ENCODE measurements at regions of chr14 and their contacts with region 1.

Region 1: GRCh38 chr14:75126679-75127473 is at the start of gene NEK9:
- DNase-seq: peak; percentile 93
- H3K4me3 ChIP-seq: peak within 1 kb of the TSS; percentile 69
- H3K27ac ChIP-seq: peak within 1 kb of the TSS; percentile 83
- H3K4me1 ChIP-seq: peaks cover 20% of the 10 kb centered on the region
- H3K27me3 ChIP-seq: no peaks in the 10 kb centered on the region
- CTCF ChIP-seq: no peak
- total RNA-seq, gene NEK9: 75.8 and 76.1 TPM in 2 replicates

Region 2: DNA sequence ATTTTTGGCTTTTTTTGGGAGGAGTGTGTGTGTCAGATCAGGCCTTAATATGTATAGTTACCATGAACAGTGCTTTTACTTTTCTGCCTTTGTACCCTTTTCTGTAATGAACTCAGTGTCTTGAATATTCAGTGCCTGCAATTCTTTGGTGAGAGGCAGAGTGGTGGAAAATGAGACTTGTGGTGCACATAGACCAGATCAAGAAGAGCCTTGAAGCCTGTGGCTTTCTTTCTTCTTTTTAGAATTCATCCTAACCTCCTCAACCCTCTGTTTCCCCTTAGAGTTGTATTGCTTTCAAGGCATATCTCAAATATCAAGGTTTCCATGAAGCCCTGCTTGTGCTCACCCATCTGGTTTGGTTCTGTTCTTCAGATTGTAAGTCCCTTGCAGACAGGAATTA is 361.2 kb before region 1 on chr14:
- CTCF ChIA-PET with region 1: no interaction called
- POLR2A ChIA-PET with region 1: no interaction called
- intact Hi-C with region 1: no loop called
- DNase-seq: no peak
- H3K4me3 ChIP-seq: peak overlapping the region; percentile 94
- H3K27ac ChIP-seq: no peak overlapping the region
- H3K4me1 ChIP-seq: no peaks in the 10 kb centered on the region
- H3K27me3 ChIP-seq: no peaks in the 10 kb centered on the region
- CTCF ChIP-seq: no peak

Region 3: DNA sequence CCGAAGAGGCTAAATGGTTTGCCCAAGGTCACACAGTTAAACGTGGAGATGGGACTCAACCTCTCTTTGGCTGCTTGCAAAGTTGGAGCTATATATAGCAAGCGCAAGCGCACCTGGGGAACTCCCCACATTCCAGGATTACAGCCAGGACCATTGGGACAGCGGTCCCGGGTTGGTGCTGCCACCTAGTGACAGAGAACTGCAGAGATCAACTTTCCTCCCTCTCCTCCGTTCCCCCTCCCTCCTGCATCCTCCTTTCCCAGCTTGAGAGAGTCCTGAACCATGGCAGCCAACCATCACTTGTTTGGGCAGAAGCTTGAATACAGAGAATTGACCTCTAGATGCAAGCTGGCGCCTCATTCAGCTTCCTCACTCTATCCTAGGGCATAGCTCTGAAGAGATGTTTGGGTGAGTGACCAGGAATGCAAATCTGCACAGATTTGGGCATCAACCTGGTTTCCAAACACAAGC is 434.1 kb after region 1 on chr14:
- CTCF ChIA-PET with region 1: no interaction called
- POLR2A ChIA-PET with region 1: no interaction called
- intact Hi-C with region 1: loop called (anchors 10 kb)
- DNase-seq: peak; percentile 64
- H3K4me3 ChIP-seq: no peak overlapping the region
- H3K27ac ChIP-seq: no peak overlapping the region
- H3K4me1 ChIP-seq: no peaks in the 10 kb centered on the region
- H3K27me3 ChIP-seq: peaks cover 9% of the 10 kb centered on the region
- CTCF ChIP-seq: peak; percentile 87